Naive thymus-derived CD4-positive, alpha-beta T cell (primary cell): ENCODE measurements at regions of chr15 and their contacts with region 1.

Region 1: DNA sequence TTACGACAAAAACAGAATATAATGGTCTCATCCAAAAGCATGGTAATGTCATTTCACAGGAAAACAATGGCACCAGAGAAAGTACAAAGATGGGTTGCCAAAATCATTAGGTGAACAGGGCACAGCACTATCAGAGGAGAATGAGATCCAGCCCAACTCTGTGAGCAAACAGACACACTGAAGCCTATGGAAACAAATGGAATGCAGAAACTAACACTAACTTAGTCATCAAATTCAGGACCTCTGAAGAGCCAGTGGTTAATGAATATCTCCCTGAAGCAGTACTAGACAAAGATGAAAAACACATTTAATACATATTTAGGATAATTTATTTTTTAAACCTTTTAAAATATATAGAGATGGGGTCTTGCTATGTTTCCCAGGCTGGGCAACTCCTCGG is 14.6 kb upstream of the RPS17 start:
- DNase-seq: no peak
- ATAC-seq: no peak
- H3K4me3 ChIP-seq: no peak overlapping the region
- H3K4me3 Mint-ChIP-seq: no peak overlapping the region
- H3K27ac ChIP-seq: no peak overlapping the region
- H3K27ac Mint-ChIP-seq: no peak overlapping the region
- H3K4me1 ChIP-seq: no peaks in the 10 kb centered on the region
- H3K4me1 Mint-ChIP-seq: no peaks in the 10 kb centered on the region
- H3K27me3 ChIP-seq: no peaks in the 10 kb centered on the region
- H3K27me3 Mint-ChIP-seq: peaks cover 0 to 38% (median 4%) of the 10 kb centered on the region in 5 donors

Region 2: DNA sequence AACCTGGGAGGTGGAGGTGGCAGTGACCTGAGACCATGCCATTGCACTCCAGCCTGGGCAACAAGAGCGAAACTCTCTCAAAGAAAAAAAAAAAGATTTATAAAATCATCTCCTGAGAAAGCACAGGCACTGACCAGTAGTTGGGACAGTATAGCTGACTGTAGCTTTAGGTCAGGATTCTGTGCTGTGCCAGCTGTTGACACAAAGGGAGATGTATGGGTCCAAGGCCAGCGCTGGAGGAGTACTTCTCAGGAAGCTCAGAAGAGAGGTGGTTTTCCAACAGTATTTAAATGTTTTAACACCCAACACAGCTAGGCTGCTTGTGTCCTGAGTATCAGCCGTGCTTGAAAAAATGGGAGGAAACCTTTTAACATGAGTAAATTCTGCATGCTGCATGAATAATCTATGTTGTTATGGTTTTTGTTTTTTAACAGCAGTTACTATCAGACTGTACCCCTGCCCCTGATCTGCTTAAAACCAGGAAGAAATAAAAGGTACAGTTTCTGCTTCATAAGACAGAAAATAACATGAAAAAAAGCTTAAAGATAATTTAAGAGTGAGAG is 437.7 kb after region 1 on chr15:
- CTCF ChIA-PET with region 1: no interaction called
- POLR2A ChIA-PET with region 1: no interaction called
- intact Hi-C with region 1: loop called in 1 of 2 experiments (anchors 5 kb)
- DNase-seq: no peak
- ATAC-seq: no peak
- H3K4me3 ChIP-seq: no peak overlapping the region
- H3K4me3 Mint-ChIP-seq: no peak overlapping the region
- H3K27ac ChIP-seq: no peak overlapping the region
- H3K27ac Mint-ChIP-seq: no peak overlapping the region
- H3K4me1 ChIP-seq: peaks cover under 1 to 1% of the 10 kb centered on the region in 2 donors
- H3K4me1 Mint-ChIP-seq: peaks cover 2 to 11% (median 9%) of the 10 kb centered on the region in 7 donors
- H3K27me3 ChIP-seq: no peaks in the 10 kb centered on the region
- H3K27me3 Mint-ChIP-seq: no peaks in the 10 kb centered on the region